GM12878 (cell line): ENCODE measurements at regions of chr3 and their contacts with region 1.

Region 1: GRCh38 chr3:10292505-10293419 is at the start of gene GHRL:
- DNase-seq: peak; percentile 68
- ATAC-seq: peak; percentile 90
- H3K4me3 ChIP-seq: peak within 1 kb of the TSS; percentile 20
- H3K27ac ChIP-seq: peak within 1 kb of the TSS; percentile 66
- H3K4me1 ChIP-seq: peaks cover 5% of the 10 kb centered on the region; the same call in 1 of the 2 replicates
- H3K27me3 ChIP-seq: no peaks in the 10 kb centered on the region
- CTCF ChIP-seq: no peak
- EP300 ChIP-seq: peak; percentile 26 to 50; a peak in 2 of 4 replicates
- POLR2A ChIP-seq: peak; percentile 56
- RAD21 ChIP-seq: no peak
- polyA plus RNA-seq, gene GHRL: 0.35 to 0.58 TPM

Region 2: DNA sequence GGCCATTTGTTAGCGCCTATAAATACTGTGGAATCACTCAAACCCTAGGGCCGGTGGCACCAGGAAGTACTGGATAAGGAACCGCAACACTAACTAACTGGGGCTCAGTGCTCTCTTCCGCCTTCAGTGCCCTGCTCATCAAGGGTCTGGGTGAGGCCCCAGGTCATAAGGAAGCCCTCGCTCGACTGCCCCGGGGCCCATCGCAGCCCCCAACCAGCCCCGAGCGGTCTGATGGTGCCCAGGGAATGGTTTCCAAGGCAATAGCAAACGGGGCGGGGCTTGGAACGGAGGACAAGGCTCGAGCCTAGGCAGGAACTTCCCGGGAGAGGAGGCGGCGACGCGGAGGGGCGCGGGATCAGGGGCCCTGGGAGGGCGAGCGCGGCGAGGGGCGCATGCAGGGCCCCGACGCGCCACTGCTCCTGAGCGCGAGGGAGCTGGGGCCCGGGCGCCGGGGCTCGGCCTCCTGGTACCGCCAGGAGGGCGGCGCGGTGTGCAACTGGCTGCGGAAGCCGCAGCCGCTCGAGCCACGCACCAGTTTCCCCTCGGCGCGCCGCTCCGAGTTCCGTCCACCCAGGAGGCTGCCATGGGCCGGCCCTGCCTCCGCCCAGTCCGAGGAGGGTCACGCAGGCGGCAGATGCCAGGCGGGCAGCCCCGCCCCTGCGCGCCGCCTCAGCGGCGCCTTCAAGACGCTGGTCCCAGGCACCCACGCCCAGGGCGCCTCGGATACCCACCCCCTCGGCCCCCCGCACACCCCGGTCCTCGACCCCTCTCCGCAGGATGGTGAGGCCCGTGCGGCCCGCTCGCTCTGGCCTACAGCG is 482.9 kb before region 1 on chr3 and contains the start of gene TTLL3:
- CTCF ChIA-PET with region 1: no interaction called
- POLR2A ChIA-PET with region 1: interaction called, 12 read pairs
- RAD21 ChIA-PET with region 1: no interaction called
- SMC1A ChIA-PET with region 1: no interaction called
- in situ Hi-C with region 1: no loop called
- intact Hi-C with region 1: no loop called
- DNase-seq: no peak
- ATAC-seq: peak; percentile 74
- H3K4me3 ChIP-seq: peak within 1 kb of the TSS; percentile 81
- H3K27ac ChIP-seq: peak within 1 kb of the TSS; percentile 75
- H3K4me1 ChIP-seq: peaks cover 13% of the 10 kb centered on the region
- H3K27me3 ChIP-seq: no peaks in the 10 kb centered on the region
- CTCF ChIP-seq: no peak
- EP300 ChIP-seq: no peak
- POLR2A ChIP-seq: peak; percentile 93
- RAD21 ChIP-seq: no peak
- polyA plus RNA-seq, gene TTLL3: 4.2 to 6.8 TPM

Region 3: DNA sequence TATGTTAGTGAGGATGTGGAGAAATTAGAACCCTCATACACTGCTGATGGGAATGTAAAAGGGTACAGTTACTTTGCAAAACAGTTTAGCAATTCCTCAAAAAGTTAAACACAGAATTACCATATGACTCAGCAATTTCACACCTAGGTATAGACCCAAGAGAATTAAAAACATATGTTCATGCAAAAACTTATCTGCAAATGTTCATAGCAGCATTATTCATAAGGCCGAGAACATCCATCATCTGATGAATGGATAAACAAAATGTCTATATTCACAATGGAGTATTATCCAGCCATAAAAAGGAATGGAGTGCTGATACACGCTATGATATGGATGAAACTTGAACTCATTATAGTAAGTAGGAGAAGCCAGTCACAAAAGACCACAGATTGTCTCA is 17.8 kb after region 1 on chr3:
- CTCF ChIA-PET with region 1: no interaction called
- POLR2A ChIA-PET with region 1: no interaction called
- RAD21 ChIA-PET with region 1: no interaction called
- SMC1A ChIA-PET with region 1: no interaction called
- in situ Hi-C with region 1: no loop called
- intact Hi-C with region 1: no loop called
- DNase-seq: no peak
- ATAC-seq: no peak
- H3K4me3 ChIP-seq: no peak overlapping the region
- H3K27ac ChIP-seq: no peak overlapping the region
- H3K4me1 ChIP-seq: no peaks in the 10 kb centered on the region
- H3K27me3 ChIP-seq: no peaks in the 10 kb centered on the region
- CTCF ChIP-seq: no peak
- EP300 ChIP-seq: no peak
- POLR2A ChIP-seq: no peak
- RAD21 ChIP-seq: no peak

Region 4: DNA sequence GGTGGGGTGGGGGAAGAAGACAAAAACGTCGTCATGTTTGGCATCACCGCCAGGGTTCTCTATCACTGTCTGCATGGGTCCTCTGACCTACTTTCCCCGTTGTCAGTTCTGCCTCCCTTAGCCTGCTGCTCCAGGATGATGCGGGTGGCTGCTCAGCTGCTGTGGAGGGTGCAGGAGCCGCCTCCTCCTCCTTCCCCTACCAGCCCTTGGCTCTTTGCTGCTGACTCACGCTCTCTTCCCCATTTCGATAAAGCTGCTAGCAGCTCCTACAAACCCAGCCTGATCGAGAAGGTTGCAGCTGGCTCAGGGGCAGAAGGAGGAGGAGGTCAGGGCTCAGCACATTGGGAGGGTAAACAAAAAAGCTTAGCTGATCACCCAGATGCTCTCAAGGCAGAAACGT is 77.7 kb after region 1 on chr3:
- CTCF ChIA-PET with region 1: no interaction called
- POLR2A ChIA-PET with region 1: no interaction called
- RAD21 ChIA-PET with region 1: no interaction called
- SMC1A ChIA-PET with region 1: no interaction called
- in situ Hi-C with region 1: no loop called
- intact Hi-C with region 1: no loop called
- DNase-seq: no peak
- ATAC-seq: no peak
- H3K4me3 ChIP-seq: no peak overlapping the region
- H3K27ac ChIP-seq: no peak overlapping the region
- H3K4me1 ChIP-seq: no peaks in the 10 kb centered on the region
- H3K27me3 ChIP-seq: no peaks in the 10 kb centered on the region; a peak in 1 of 4 replicates
- CTCF ChIP-seq: no peak
- EP300 ChIP-seq: no peak
- POLR2A ChIP-seq: no peak
- RAD21 ChIP-seq: no peak

Region 5: GRCh38 chr3:10945683-10946287 is 653.0 kb after region 1 on chr3:
- CTCF ChIA-PET with region 1: no interaction called
- POLR2A ChIA-PET with region 1: no interaction called
- RAD21 ChIA-PET with region 1: no interaction called
- SMC1A ChIA-PET with region 1: no interaction called
- in situ Hi-C with region 1: no loop called
- intact Hi-C with region 1: no loop called
- DNase-seq: no peak
- ATAC-seq: peak; percentile 98
- H3K4me3 ChIP-seq: no peak overlapping the region
- H3K27ac ChIP-seq: no peak overlapping the region
- H3K4me1 ChIP-seq: no peaks in the 10 kb centered on the region
- H3K27me3 ChIP-seq: no peaks in the 10 kb centered on the region
- CTCF ChIP-seq: peak; percentile 64 to 86 (median 70)
- EP300 ChIP-seq: no peak
- POLR2A ChIP-seq: no peak
- RAD21 ChIP-seq: peak; percentile 48